T-cell (primary cell): ENCODE measurements at regions of chr20 and their contacts with region 1.

Region 1: DNA sequence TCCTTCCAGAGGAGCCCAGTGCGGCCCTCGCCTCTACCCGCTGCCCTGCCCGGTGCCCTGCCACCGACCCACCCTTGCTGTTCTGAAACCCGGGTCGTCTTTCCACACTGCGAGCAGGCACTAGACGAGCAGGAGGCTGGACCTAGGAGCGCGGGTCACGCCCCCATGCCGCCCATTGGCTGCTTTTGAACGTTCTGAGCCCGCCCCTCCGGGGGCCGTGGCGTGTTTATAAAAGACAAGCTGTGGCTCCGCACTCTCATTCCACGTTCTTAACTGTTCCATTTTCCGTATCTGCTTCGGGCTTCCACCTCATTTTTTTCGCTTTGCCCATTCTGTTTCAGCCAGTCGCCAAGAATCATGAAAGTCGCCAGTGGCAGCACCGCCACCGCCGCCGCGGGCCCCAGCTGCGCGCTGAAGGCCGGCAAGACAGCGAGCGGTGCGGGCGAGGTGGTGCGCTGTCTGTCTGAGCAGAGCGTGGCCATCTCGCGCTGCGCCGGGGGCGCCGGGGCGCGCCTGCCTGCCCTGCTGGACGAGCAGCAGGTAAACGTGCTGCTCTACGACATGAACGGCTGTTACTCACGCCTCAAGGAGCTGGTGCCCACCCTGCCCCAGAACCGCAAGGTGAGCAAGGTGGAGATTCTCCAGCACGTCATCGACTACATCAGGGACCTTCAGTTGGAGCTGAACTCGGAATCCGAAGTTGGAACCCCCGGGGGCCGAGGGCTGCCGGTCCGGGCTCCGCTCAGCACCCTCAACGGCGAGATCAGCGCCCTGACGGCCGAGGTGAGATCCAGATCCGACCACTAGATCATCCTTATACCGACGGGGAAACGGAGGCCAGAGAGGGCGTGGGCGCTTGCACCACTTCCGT is at the start of gene ID1:
- DNase-seq: peak; percentile 78 to 93 (median 88)
- ATAC-seq: peak; percentile 93 to 96 (median 94)
- H3K4me3 ChIP-seq: peak within 1 kb of the TSS; percentile 46 to 81
- H3K4me3 Mint-ChIP-seq: peak within 1 kb of the TSS; percentile 85 to 93 (median 88)
- H3K27ac ChIP-seq: no peak within 1 kb of the TSS
- H3K27ac Mint-ChIP-seq: peak within 1 kb of the TSS in 1 of 2 donors; percentile 17
- H3K4me1 ChIP-seq: peaks cover 8 to 29% of the 10 kb centered on the region in 2 experiments
- H3K4me1 Mint-ChIP-seq: peaks cover 28 to 31% (median 30%) of the 10 kb centered on the region in 3 donors
- H3K27me3 ChIP-seq: peaks cover 4 to 82% of the 10 kb centered on the region in 2 experiments
- H3K27me3 Mint-ChIP-seq: peaks cover 20 to 47% of the 10 kb centered on the region in 2 donors
- total RNA-seq, gene ID1: 1.4 to 11.2 (median 2.2) TPM

Region 2: DNA sequence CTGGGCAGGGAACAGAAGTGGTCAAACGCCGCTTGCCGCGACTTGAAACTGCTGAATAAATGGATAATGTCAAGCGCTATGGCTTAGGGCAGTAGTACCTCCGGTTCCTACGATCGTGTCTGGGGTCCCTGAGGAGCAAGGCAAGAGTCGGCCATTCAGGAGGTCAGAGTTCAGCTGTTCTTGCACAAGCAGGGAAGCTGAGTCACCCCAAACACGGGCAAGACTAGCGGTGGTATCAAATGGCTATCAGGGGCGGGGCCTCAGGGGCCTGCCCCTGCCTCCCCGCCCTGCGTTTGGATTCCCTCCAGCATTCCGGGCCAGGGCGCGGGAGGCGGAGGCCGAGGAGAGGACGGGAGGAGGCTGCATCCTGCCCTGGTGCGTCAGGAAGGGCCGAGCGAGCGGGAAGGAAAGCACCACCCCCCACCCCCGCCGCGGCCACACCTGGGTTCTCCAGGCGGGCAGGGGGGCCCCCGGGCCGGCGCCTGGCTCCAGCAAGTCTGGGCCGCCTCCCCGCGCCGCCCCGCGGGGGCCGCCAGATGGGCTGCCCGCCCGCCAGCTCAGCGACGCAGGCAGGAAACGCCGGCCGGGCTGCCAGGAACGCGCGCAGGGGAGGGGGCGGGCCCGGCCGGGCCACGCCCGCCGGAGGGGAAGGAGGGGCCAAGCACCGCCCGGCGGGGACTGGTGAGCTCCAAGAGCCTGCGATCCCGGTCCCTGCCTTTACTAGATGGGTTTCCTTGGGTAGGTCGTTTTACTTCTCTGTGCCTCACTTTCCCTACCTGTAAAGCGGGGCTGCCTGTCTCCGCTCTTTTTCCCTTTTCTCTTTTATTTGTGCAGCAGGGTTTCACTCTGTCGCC is 32.3 kb before region 1 on chr20:
- CTCF ChIA-PET with region 1: interaction called, 33 to 46 read pairs
- POLR2A ChIA-PET with region 1: interaction called, 5 read pairs
- DNase-seq: peak; percentile 69 to 91 (median 82)
- ATAC-seq: peak; percentile 89 to 95 (median 93)
- H3K4me3 ChIP-seq: peak overlapping the region; percentile 83 to 84
- H3K4me3 Mint-ChIP-seq: peak overlapping the region; percentile 85 to 88 (median 86)
- H3K27ac ChIP-seq: peak overlapping the region; percentile 81
- H3K27ac Mint-ChIP-seq: peak overlapping the region; percentile 85 to 88
- H3K4me1 ChIP-seq: peaks cover 5 to 21% of the 10 kb centered on the region in 2 experiments
- H3K4me1 Mint-ChIP-seq: peaks cover 18 to 29% (median 27%) of the 10 kb centered on the region in 3 donors
- H3K27me3 ChIP-seq: no peaks in the 10 kb centered on the region
- H3K27me3 Mint-ChIP-seq: no peaks in the 10 kb centered on the region

Region 3: DNA sequence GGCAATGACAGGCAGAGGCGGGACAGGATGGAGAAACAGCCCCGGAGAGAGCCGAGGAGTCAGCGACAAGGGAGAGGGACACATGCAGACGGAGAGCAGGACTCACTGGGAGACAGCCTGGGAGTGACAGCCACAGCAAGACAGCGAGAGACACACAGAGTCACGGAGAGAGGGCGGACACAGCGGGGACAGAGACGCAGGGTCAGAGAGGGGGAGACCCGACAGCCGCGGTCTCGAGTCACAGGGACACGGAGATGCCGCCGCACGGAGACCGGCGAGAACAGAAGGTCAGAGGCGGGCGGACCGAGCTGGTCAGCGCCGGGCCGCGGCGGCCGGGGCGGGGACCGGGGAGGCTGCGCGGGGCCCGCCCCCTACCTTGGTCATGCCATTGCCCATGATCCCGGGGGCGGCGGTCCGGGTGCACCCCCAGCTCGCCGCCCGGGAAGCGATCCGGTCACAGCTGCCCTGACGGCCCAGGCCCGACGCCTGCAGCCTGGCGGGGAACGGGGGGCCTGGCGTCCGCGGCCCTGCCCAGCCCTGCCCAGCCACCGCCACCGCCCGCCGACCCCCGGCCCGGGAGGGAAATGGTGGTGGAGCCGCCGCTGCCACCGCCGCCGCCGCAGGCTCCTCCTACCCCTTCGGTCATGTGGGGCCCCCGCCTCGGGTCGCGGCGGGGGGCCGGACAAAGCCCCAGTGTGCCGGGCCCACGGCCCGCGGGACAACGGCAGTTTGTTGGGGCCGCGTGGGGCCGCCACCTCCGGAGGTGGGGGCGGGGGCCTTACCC is 264.9 kb after region 1 on chr20 and contains the starts of genes DUSP15 and TTLL9:
- CTCF ChIA-PET with region 1: no interaction called
- POLR2A ChIA-PET with region 1: no interaction called
- DNase-seq: peak in 1 of 35 experiments; percentile 24
- ATAC-seq: peak; percentile 39 to 56 (median 48)
- H3K4me3 ChIP-seq: peak within 1 kb of the TSS; percentile 30 to 58
- H3K4me3 Mint-ChIP-seq: peak within 1 kb of the TSS; percentile 81 to 92 (median 83)
- H3K27ac ChIP-seq: no peak within 1 kb of the TSS
- H3K27ac Mint-ChIP-seq: peak within 1 kb of the TSS in 1 of 2 donors; percentile 18
- H3K4me1 ChIP-seq: peaks cover 0 to 15% of the 10 kb centered on the region in 2 experiments
- H3K4me1 Mint-ChIP-seq: peaks cover 8 to 19% (median 14%) of the 10 kb centered on the region in 3 donors
- H3K27me3 ChIP-seq: peaks cover 0 to 44% of the 10 kb centered on the region in 2 experiments
- H3K27me3 Mint-ChIP-seq: peaks cover 31 to 43% of the 10 kb centered on the region in 2 donors
- total RNA-seq, gene DUSP15: not detected
- total RNA-seq, gene TTLL9: 0.16 TPM in 1 of 5 donors, not detected in the others